ENCODE measurements at regions of chr2 and their contacts with region 1.

Region 1: DNA sequence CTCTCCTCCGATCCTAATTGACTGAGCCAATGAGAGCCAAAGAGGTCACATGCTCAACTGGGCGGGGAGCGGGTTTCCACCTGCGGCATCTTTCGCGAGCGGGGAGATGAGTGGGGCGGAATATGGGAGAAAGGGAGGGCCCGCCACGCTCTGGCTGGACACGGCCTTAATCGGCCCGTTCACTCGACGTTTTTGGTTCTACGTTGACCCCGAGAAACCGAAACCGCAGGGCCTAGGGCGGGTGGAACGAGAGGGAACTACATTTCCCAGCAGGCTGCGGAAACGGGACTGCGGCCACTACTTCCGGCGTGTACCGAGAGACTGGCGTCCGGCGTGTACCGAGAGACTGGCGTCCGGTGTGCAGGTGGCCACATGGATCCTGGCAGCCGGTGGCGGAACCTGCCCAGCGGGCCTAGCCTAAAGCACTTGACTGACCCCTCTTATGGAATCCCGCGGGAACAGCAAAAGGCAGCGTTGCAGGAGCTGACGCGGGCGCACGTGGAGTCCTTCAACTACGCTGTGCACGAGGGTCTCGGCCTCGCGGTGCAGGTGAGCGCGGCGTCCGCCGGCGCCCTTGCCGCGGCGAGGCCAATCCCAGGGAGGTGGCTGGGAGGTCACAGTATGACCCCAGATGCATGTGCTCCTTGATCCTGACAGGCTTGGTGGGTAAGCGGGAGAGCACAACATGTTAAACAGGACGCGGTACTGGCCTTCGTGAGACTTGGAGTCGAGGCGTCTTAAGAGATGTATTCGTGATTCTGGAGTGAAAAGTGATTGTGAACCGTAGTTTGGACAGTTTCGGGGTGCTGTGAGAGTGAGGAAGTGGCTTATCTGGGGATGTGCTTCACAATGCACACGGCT is at the start of gene POLR1B:
- DNase-seq: peak in 8 of 10 donors; percentile 53 to 81 (median 66)
- ATAC-seq: peak; percentile 85 to 88
- H3K4me3 Mint-ChIP-seq: no peak within 1 kb of the TSS
- H3K27ac Mint-ChIP-seq: no peak within 1 kb of the TSS
- H3K4me1 Mint-ChIP-seq: peaks cover 6 to 24% (median 12%) of the 10 kb centered on the region in 4 donors
- H3K27me3 Mint-ChIP-seq: no peaks in the 10 kb centered on the region
- polyA plus RNA-seq, gene POLR1B: 14.9 to 23.8 (median 17.5) TPM

Region 2: GRCh38 chr2:112275306-112275886 is 267.0 kb before region 1 on chr2 and contains the start of gene ZC3H6:
- POLR2A ChIA-PET with region 1: interaction called, 16 read pairs
- DNase-seq: peak; percentile 95 to 100 (median 100)
- ATAC-seq: peak; percentile 88 to 92
- H3K4me3 Mint-ChIP-seq: peak within 1 kb of the TSS; percentile 85 to 97 (median 92)
- H3K27ac Mint-ChIP-seq: peak within 1 kb of the TSS; percentile 94 to 100 (median 99)
- H3K4me1 Mint-ChIP-seq: peaks cover 0 to 31% (median 18%) of the 10 kb centered on the region in 4 donors
- H3K27me3 Mint-ChIP-seq: no peaks in the 10 kb centered on the region
- polyA plus RNA-seq, gene ZC3H6: 5.0 to 10.3 (median 9.0) TPM